ENCODE measurements at regions of chr14 and their contacts with region 1.

Region 1: GRCh38 chr14:69191340-69192111 is at the start of gene EXD2:
- DNase-seq: peak; percentile 83
- ATAC-seq: peak; percentile 82
- H3K4me3 ChIP-seq: peak within 1 kb of the TSS; percentile 55 to 75 (median 62)
- H3K4me3 Mint-ChIP-seq: peak within 1 kb of the TSS; percentile 95
- H3K27ac ChIP-seq: peak within 1 kb of the TSS; percentile 28 to 70
- H3K27ac Mint-ChIP-seq: peak within 1 kb of the TSS; percentile 90
- H3K4me1 ChIP-seq: peaks cover 4 to 7% of the 10 kb centered on the region in 2 donors
- H3K4me1 Mint-ChIP-seq: peaks cover 14% of the 10 kb centered on the region
- H3K27me3 ChIP-seq: no peaks in the 10 kb centered on the region
- H3K27me3 Mint-ChIP-seq: peaks cover 7% of the 10 kb centered on the region
- CTCF ChIP-seq: no peak
- total RNA-seq, gene EXD2: 10.0 and 10.2 TPM in 2 replicates

Region 2: DNA sequence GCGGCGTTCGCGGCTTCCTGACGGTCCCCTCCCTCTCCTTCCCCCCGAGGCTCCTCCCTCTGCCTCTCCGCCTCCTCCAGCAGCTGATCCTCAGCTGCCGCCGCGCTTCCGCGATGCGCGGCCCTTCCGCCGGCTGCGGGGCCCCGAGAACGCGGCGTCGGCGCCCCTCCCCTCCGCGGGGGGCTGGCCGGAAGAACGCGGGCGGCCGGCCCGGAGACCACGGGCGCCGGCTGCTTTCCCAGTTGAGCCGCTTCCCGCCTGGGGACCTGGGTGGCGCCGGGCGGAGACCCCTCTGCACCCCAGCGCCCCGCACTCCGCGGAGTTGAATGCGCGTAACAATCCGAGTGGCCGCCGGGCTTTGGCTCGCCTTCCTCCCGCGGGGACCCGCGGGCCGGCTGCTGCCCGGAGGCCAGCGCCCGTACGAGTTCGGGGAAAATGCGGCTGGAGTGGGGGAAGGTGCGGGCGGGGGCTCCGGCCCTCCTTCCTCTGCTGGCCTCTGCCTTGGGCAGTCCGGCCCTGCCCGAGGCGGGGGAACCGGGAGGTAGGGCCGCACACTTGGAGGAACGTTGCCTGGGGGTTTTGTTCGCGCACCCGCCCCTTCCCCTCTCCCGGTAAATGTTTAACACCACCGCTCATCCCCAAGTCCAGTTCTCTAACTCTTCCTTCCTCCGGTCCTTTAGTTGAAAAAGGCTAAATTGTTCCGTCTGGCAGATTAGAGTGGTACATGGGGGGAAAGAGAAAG is 38.2 kb before region 1 on chr14:
- CTCF ChIA-PET with region 1: interaction called, 7 read pairs
- POLR2A ChIA-PET with region 1: interaction called, 3 read pairs
- intact Hi-C with region 1: loop called (anchors 1 kb)
- DNase-seq: peak; percentile 95
- ATAC-seq: peak; percentile 92
- H3K4me3 ChIP-seq: peak overlapping the region; percentile 21 to 94 (median 92)
- H3K4me3 Mint-ChIP-seq: peak overlapping the region; percentile 89
- H3K27ac ChIP-seq: peak overlapping the region; percentile 56 to 72
- H3K27ac Mint-ChIP-seq: peak overlapping the region; percentile 95
- H3K4me1 ChIP-seq: peaks cover 9 to 21% of the 10 kb centered on the region in 2 donors
- H3K4me1 Mint-ChIP-seq: peaks cover 32% of the 10 kb centered on the region
- H3K27me3 ChIP-seq: no peaks in the 10 kb centered on the region
- H3K27me3 Mint-ChIP-seq: peaks cover 3% of the 10 kb centered on the region
- CTCF ChIP-seq: no peak

Region 3: GRCh38 chr14:69175130-69175529 is 16.4 kb before region 1 on chr14:
- CTCF ChIA-PET with region 1: no interaction called
- POLR2A ChIA-PET with region 1: no interaction called
- intact Hi-C with region 1: no loop called
- DNase-seq: no peak
- ATAC-seq: no peak
- H3K4me3 ChIP-seq: no peak overlapping the region
- H3K4me3 Mint-ChIP-seq: no peak overlapping the region
- H3K27ac ChIP-seq: no peak overlapping the region
- H3K27ac Mint-ChIP-seq: no peak overlapping the region
- H3K4me1 ChIP-seq: no peaks in the 10 kb centered on the region
- H3K4me1 Mint-ChIP-seq: no peaks in the 10 kb centered on the region
- H3K27me3 ChIP-seq: peaks cover 0 to 8% (median 2%) of the 10 kb centered on the region in 4 experiments
- H3K27me3 Mint-ChIP-seq: peaks cover 26% of the 10 kb centered on the region
- CTCF ChIP-seq: no peak

Measured in B cell (primary cell).